ENCODE measurements at regions of chr1 and their contacts with region 1.

Region 1: DNA sequence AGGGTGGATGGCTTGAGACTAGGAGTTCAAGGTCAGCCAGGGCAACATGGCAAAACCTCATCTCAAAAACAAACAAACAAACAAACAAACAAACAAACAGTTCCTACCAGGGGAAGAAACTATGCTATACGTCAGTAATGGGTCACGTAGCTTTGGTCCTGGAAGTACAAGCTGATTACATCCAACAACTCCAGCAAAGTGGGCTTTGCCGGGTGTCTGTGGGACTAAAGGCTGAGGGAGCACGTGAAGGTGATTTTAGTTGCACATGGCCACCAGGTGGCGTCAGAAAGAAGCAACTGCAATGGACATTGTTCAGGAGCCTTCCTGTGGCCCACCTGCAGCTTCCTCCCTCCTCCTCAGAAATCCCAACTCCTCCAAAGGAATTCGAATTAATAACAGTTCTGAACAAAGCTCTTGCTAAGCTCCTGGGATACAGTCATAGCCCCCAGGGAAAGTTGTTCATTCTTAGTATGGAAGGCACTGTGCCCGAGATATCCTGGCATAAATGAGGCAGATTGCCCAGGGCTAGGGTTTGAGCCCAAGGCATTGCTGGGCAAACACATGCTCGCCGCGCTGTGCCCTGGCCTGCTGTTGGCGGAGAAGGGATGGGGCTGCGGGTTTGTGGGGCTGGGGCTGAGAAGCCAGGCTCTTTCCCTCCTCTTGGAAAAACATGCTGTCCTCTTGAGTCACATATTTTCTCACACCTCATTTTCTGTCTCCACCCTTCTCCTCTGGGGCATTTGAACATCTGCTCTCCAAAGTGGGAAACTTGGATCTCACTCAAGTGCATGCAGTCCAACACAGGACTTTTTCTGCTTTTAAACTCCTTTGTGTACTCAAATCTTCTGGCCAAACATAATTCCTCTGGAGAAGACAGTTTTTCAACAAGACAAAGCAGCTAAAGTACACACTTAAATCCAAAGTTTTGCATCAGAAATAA is 28.6 kb downstream of the AKNAD1 start:
- DNase-seq: peak; percentile 88
- CTCF ChIP-seq: peak; percentile 64

Region 2: DNA sequence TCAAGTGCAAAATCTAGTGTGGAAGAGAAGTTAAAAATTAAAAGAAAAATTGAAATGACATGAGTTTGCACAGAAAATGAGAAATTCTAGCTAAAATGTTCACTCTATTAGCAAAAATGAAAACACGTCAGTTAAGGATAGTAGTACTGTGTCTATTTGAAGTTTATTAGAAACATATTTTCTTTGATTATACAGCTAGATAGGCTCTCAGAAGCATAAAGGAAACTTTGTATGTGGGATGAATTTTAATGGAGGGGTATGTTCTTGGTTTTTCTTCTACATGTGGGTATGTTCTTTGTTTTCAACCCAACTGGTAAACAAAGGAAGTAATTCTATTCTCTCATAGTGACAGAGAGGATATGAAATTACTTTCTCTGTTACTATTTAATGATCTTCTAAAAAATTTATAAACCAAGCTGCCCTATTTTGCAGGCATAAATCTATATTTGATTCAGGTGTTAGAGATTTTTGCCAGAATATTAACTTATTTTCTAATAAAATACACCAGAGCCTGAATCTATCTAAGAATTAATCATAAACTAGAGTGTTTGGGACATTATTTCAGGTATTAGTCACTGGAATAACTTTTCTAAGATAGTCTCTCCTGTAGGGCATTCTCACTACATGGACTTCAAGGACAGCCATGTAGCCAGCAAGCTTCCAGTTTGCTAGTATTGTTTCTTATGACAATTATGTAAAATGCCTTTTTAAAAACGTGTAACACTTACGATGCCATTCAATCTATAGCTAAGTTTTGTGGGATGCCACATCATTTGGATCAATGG is 64.3 kb after region 1 on chr1:
- in situ Hi-C with region 1: loop called (anchors 5 kb)
- DNase-seq: no peak
- CTCF ChIP-seq: no peak

Region 3: GRCh38 chr1:109099938-109100773 is 271.9 kb after region 1 on chr1:
- in situ Hi-C with region 1: loop called (anchors 25 kb)
- DNase-seq: peak; percentile 96
- CTCF ChIP-seq: peak; percentile 87